RWPE1 (cell line): ENCODE measurements at regions of chr9 and their contacts with region 1.

Region 1: DNA sequence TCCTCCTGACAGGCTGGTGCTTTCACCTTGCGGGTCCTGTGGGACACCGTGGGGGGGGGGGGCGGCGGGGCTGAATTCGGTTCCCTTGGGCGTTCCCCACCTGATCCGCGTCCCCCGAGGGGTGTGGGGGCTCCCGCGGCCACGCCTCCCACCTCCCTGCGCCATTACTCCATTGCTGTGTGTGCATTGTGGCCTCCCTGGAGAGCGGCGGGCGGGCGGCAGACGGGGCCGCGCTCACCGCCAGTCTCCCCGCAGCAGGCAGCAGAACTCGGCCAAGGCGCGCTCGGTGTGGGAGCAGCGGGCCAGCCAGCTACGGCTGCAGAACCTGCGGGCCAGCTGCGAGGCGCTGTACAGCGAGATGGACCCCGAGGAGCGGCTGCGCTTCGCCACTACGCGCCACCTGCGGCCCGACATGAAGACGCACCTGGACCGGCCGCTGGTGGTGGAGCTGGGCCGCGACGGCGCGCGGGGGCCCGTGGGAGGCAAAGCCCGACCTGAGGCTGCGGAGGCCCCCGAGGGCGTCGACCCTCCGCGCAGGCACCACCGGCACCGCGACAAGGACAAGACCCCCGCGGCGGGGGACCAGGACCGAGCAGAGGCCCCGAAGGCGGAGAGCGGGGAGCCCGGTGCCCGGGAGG is 145.3 kb downstream of the CACNA1B start:
- DNase-seq: no peak
- H3K27ac ChIP-seq: no peak overlapping the region
- CTCF ChIP-seq: no peak

Region 2: GRCh38 chr9:137791947-137792346 is 230.9 kb before region 1 on chr9:
- CTCF ChIA-PET with region 1: no interaction called
- POLR2A ChIA-PET with region 1: interaction called, 12 read pairs
- DNase-seq: no peak
- H3K27ac ChIP-seq: no peak overlapping the region
- CTCF ChIP-seq: no peak

Region 3: GRCh38 chr9:137878146-137878941 is 144.5 kb before region 1 on chr9:
- CTCF ChIA-PET with region 1: no interaction called
- POLR2A ChIA-PET with region 1: no interaction called
- DNase-seq: peak; percentile 57
- H3K27ac ChIP-seq: no peak overlapping the region
- CTCF ChIP-seq: no peak

Region 4: DNA sequence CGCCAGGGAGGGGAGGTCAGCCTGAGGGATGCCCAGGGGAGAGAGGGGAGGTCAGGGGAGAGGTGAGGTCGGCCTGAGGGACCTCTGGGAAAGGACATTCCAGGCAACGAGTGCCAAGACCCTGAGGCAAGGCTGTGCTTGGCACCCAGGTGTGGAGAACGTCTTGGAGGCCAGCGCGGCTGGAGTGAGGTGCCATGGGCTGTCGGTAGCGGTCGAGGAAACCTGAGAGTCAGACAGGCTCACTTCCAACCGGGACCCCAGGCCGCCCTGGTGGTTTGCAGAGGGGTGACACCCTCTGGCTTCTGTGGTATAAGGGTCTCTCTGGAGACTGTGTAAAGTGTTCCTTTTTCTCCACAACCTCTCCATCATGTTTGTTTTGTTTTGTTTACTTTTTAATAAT is 62.4 kb before region 1 on chr9:
- CTCF ChIA-PET with region 1: no interaction called
- POLR2A ChIA-PET with region 1: no interaction called
- DNase-seq: no peak
- H3K27ac ChIP-seq: no peak overlapping the region
- CTCF ChIP-seq: no peak